Common myeloid progenitor, CD34-positive (primary cell): ENCODE measurements at regions of chr12 and their contacts with region 1.

Region 1: GRCh38 chr12:38906482-38907170 is 1.2 kb upstream of the CPNE8 start:
- DNase-seq: peak; percentile 88 to 96 (median 95)
- H3K4me3 ChIP-seq: peak overlapping the region; percentile 70 to 94 (median 84)
- H3K27ac ChIP-seq: peak overlapping the region; percentile 53 to 88
- H3K4me1 ChIP-seq: peaks cover 22 to 40% (median 31%) of the 10 kb centered on the region in 4 experiments
- H3K27me3 ChIP-seq: no peaks in the 10 kb centered on the region

Region 2: DNA sequence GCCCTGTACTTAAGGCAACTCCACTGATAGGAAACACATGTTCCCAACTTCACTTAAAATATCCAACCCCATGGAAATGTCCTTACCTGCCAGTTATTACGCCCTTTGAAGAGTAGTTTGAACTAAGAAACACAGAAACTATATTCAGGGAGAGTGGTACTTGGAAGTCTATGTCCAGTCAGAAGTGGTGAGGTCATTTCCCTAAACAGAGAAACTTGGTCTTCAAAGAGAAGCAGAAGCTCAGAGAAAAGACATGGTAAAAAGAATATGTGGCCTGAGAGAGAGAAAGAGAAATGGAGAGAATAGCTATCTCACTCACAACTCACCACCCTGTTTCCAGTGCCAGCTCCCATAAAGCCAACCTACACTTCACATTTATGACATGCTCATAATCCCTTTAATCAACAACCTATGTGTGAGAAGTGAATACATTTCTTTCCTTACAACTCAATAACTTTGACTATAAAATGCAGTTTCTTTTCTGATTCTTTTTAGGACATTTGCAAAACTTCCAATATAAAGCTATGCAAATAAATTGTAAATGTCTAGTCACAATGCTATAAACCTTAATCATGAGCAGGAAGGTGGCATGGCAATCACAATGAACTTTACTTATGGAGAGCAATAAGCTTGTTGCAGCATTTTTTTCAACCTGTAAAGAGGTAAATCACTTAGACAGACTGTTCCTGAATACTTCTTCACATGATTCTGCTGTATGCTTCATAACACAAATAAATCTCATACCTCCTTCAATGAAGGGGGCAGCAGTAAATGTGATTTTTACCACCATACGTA is 68.4 kb before region 1 on chr12:
- CTCF ChIA-PET with region 1: interaction called, 13 read pairs
- POLR2A ChIA-PET with region 1: no interaction called
- DNase-seq: no peak
- H3K4me3 ChIP-seq: no peak overlapping the region
- H3K27ac ChIP-seq: no peak overlapping the region
- H3K4me1 ChIP-seq: no peaks in the 10 kb centered on the region
- H3K27me3 ChIP-seq: no peaks in the 10 kb centered on the region

Region 3: DNA sequence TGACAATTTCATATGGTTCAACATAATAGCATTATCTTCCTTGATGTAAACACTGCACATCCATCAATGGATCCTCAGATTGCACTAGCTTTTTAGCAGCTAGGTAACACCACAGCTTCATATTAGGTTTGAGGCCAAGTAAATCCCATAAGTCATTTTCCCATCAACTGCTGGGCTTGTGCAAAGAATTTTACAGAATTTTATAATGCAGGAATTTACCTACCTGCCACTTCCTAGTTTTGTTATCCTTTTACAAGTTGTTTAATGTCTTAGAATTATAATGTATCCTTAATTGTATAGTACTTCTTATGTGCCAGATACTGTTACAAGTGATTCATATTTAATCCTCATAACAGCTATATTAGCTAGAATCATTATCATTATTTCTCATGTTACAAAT is 37.6 kb before region 1 on chr12:
- CTCF ChIA-PET with region 1: interaction called, 17 read pairs
- POLR2A ChIA-PET with region 1: no interaction called
- DNase-seq: no peak
- H3K4me3 ChIP-seq: no peak overlapping the region
- H3K27ac ChIP-seq: no peak overlapping the region
- H3K4me1 ChIP-seq: peaks cover 0 to 23% (median 16%) of the 10 kb centered on the region in 4 experiments
- H3K27me3 ChIP-seq: no peaks in the 10 kb centered on the region

Region 4: DNA sequence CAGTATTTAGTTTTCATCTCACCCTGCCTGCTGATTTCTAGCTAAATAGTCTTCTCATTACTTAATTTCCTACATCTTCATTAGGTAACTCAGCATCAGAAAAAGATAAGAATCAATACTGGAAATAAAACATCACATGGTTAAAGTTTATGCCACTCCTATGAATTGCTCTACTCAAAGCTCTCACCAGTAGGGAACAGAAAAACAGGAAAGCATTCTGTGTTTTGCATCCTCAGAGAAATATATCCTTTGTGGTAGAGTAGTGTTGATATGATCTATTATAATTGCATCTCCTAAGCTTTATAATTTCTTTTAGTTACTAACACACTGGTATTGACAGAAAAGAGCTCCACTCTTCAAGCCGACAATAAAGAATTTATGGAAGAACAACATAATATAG is 11.2 kb before region 1 on chr12:
- CTCF ChIA-PET with region 1: interaction called, 22 read pairs
- POLR2A ChIA-PET with region 1: interaction called, 5 read pairs
- DNase-seq: no peak
- H3K4me3 ChIP-seq: no peak overlapping the region
- H3K27ac ChIP-seq: no peak overlapping the region
- H3K4me1 ChIP-seq: peaks cover 1 to 29% (median 7%) of the 10 kb centered on the region in 4 experiments
- H3K27me3 ChIP-seq: no peaks in the 10 kb centered on the region

Region 5: GRCh38 chr12:38921025-38921677 is 14.5 kb after region 1 on chr12:
- CTCF ChIA-PET with region 1: interaction called, 18 read pairs
- POLR2A ChIA-PET with region 1: no interaction called
- DNase-seq: peak; percentile 65 to 83 (median 83)
- H3K4me3 ChIP-seq: no peak overlapping the region
- H3K27ac ChIP-seq: no peak overlapping the region
- H3K4me1 ChIP-seq: no peaks in the 10 kb centered on the region
- H3K27me3 ChIP-seq: no peaks in the 10 kb centered on the region